PC-9 (cell line): ENCODE measurements at regions of chr2 and their contacts with region 1.

Region 1: GRCh38 chr2:173075781-173076580 is at the start of gene MAP3K20:
- DNase-seq: peak; percentile 52 to 76
- H3K4me3 ChIP-seq: peak within 1 kb of the TSS; percentile 67
- H3K27ac ChIP-seq: peak within 1 kb of the TSS; percentile 61
- H3K4me1 ChIP-seq: peaks cover 56% of the 10 kb centered on the region
- H3K27me3 ChIP-seq: no peaks in the 10 kb centered on the region
- CTCF ChIP-seq: no peak
- total RNA-seq, gene MAP3K20: 58.5 and 60.5 TPM in 2 replicates

Region 2: DNA sequence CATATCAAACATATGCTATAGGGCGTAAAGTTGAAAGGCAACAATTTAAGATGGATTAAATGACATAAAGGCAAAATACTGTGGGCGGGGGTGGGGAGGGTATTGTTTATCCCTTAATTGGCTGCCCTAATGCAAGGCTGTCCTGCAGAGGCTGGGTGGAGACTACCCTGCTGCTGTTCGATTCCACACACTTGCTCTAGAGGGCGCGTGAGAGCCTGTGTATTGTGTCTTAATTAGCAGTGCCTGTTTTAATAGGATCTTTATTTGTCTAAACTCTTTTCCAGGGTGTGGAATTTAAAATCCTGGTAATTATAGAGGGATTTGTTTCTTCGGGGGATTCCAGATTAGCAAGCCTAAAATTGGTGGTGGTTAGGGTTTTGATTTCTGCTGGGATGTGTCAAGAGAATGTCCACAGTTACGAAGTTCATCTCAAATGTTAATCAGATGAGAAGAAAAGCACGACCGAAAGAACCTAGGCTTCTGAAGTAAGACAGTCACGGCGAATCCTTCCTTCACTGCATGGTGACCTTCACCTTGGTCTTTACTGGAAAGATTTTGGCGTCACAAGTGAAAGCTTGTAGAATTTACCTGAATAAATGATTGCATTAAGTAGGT is 103.9 kb before region 1 on chr2:
- CTCF ChIA-PET with region 1: no interaction called
- POLR2A ChIA-PET with region 1: no interaction called
- intact Hi-C with region 1: loop called (anchors 10 kb)
- DNase-seq: peak; percentile 66 to 69
- H3K4me3 ChIP-seq: no peak overlapping the region
- H3K27ac ChIP-seq: no peak overlapping the region
- H3K4me1 ChIP-seq: peaks cover 30% of the 10 kb centered on the region
- H3K27me3 ChIP-seq: no peaks in the 10 kb centered on the region
- CTCF ChIP-seq: peak; percentile 99

Region 3: GRCh38 chr2:173048897-173049661 is 26.9 kb before region 1 on chr2:
- CTCF ChIA-PET with region 1: interaction called, 4 read pairs
- POLR2A ChIA-PET with region 1: interaction called, 11 read pairs
- intact Hi-C with region 1: loop called (anchors 1 kb)
- DNase-seq: peak; percentile 91 to 100
- H3K4me3 ChIP-seq: peak overlapping the region; percentile 28; the same call in 1 of the 2 replicates
- H3K27ac ChIP-seq: peak overlapping the region; percentile 88
- H3K4me1 ChIP-seq: peaks cover 72% of the 10 kb centered on the region
- H3K27me3 ChIP-seq: no peaks in the 10 kb centered on the region
- CTCF ChIP-seq: 0 out of 2 replicates have a peak, but pooled peaks have one; percentile 6

Region 4: DNA sequence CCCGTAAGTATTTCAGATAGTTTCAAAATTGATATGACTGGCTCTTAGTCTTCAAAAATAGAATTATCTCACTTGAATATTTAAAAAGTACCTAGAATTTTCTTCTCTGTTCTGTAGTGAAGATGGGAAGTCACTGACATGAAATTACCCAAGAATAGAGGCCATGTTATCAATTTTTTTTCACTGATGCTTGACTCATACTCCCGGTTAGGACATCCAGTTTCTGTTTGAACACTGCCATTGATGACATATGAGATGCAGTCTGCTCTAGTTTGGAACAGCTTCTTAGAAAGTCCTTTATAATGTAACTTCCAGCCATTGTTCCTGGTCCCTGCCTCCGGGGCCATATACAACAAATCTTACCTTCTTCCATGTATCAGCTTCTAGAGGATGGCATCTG is 25.7 kb after region 1 on chr2:
- CTCF ChIA-PET with region 1: interaction called, 15 read pairs
- POLR2A ChIA-PET with region 1: no interaction called
- intact Hi-C with region 1: no loop called
- DNase-seq: peak in 1 of 2 experiments; percentile 62
- H3K4me3 ChIP-seq: no peak overlapping the region
- H3K27ac ChIP-seq: no peak overlapping the region
- H3K4me1 ChIP-seq: peaks cover 15% of the 10 kb centered on the region
- H3K27me3 ChIP-seq: no peaks in the 10 kb centered on the region
- CTCF ChIP-seq: no peak

Region 5: GRCh38 chr2:173210270-173211196 is 134.6 kb after region 1 on chr2:
- CTCF ChIA-PET with region 1: interaction called, 4 read pairs
- POLR2A ChIA-PET with region 1: no interaction called
- intact Hi-C with region 1: loop called (anchors 1 kb)
- DNase-seq: peak; percentile 70 to 85
- H3K4me3 ChIP-seq: no peak overlapping the region
- H3K27ac ChIP-seq: peak overlapping the region; percentile 39
- H3K4me1 ChIP-seq: peaks cover 13% of the 10 kb centered on the region
- H3K27me3 ChIP-seq: no peaks in the 10 kb centered on the region
- CTCF ChIP-seq: peak; percentile 99

Region 6: DNA sequence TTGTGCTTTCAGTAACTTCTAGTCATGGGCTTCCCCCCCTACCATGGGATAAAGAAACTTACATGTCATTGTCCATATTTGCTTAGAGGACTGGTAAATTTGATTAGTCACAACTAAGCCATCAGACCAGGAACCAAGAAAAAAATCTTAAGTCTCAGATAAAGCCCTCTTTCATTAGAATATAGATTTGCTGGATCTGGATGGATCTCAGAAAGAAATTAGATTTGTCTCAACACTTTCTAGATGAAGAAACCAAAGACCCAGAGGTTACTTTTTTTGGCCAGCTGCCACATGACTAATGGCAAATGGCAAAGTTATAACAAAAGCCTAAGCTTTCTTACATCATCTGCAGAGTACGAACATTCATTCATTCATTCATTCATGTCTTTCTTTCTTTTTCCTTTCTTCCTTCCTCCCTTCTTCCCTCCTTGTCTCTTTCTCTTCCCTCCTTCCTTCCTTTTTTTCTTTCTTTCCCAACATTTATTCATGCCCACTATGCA is 338.9 kb after region 1 on chr2:
- CTCF ChIA-PET with region 1: no interaction called
- POLR2A ChIA-PET with region 1: no interaction called
- intact Hi-C with region 1: no loop called
- DNase-seq: peak; percentile 34 to 62
- H3K4me3 ChIP-seq: no peak overlapping the region
- H3K27ac ChIP-seq: no peak overlapping the region
- H3K4me1 ChIP-seq: peaks cover 19% of the 10 kb centered on the region
- H3K27me3 ChIP-seq: no peaks in the 10 kb centered on the region
- CTCF ChIP-seq: no peak